ENCODE measurements at regions of chr4 and their contacts with region 1.

Region 1: GRCh38 chr4:27176400-27176799 is 315.8 kb downstream of the STIM2 start:
- DNase-seq: no peak
- ATAC-seq: peak; percentile 82
- H3K4me3 ChIP-seq: no peak overlapping the region
- H3K27ac ChIP-seq: no peak overlapping the region
- H3K4me1 ChIP-seq: peaks cover 0 to 3% of the 10 kb centered on the region in 2 donors
- H3K27me3 ChIP-seq: no peaks in the 10 kb centered on the region

Region 2: DNA sequence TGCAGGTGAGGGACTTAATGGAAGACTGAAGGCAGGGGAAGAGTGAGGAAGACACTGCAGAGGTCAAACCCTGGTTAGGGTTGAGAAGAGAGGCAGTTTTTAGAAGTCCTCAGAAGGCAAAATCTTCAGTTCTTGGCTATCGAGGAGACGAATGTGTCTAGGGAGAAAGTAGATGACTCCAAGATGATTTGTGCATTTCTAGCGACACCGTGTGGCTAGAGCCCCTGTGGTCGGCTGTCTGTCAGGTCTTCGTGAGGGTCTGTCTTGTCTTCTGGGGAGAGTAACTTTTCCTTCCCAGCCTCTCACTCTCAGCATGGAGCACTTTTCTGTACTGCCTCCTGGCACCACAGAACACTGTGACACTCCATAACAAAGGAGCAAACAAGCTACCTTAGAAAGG is 142.3 kb after region 1 on chr4:
- intact Hi-C with region 1: loop called (anchors 2 to 5 kb)
- DNase-seq: no peak
- ATAC-seq: peak; percentile 62
- H3K4me3 ChIP-seq: no peak overlapping the region
- H3K27ac ChIP-seq: no peak overlapping the region
- H3K4me1 ChIP-seq: peaks cover 0 to 2% of the 10 kb centered on the region in 2 donors
- H3K27me3 ChIP-seq: no peaks in the 10 kb centered on the region